MCF 10A (cell line): ENCODE measurements at regions of chr3 and their contacts with region 1.

Region 1: DNA sequence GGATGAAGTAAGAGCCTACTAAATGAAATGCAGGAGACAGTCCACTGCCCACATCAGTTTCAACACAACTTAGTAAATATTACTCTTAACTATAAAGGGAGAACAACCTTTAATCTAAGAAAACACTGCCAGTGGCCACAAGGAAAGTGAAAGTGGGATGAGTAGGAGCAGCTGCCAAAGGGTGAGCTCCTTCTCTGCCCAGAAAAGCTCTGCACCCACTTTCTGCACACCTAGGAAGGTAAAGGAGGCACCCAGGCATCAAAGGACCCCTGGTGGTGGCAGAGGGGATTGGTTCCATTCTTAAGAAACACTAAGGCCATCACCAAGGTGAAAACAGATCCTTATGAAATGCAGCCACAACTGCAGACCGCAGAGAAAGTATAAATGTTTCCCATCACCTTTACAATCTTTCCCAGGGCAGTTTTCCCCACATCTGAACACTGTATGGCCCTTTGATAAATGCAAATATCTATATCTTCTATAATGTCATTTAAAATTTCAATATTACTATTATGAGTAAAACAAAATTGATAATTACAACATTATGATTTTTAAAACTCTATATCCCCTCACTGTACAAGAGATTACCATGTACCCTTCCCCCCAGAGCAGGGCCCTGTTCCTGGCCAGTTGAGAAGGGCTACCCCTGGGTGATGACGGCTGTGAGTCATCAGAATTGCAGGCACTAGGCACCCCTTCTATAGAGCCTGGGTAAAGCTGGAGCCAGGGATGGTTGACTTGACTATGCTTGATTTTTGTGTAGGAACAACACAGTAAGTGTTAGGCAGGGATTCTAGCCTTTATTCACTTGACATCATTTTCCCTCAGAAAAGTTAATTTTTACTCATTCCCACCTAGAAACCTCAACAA is 92.0 kb downstream of the SNRK start:
- DNase-seq: peak; percentile 63
- H3K4me3 Mint-ChIP-seq: no peak overlapping the region
- H3K27ac Mint-ChIP-seq: no peak overlapping the region
- H3K4me1 Mint-ChIP-seq: no peaks in the 10 kb centered on the region
- H3K27me3 Mint-ChIP-seq: no peaks in the 10 kb centered on the region
- CTCF ChIP-seq: peak; percentile 44

Region 2: GRCh38 chr3:43223670-43224364 is 154.5 kb before region 1 on chr3:
- CTCF ChIA-PET with region 1: no interaction called
- POLR2A ChIA-PET with region 1: no interaction called
- intact Hi-C with region 1: loop called (anchors 1 kb)
- DNase-seq: no peak
- H3K4me3 Mint-ChIP-seq: no peak overlapping the region
- H3K27ac Mint-ChIP-seq: no peak overlapping the region
- H3K4me1 Mint-ChIP-seq: no peaks in the 10 kb centered on the region
- H3K27me3 Mint-ChIP-seq: no peaks in the 10 kb centered on the region
- CTCF ChIP-seq: peak; percentile 17

Region 3: DNA sequence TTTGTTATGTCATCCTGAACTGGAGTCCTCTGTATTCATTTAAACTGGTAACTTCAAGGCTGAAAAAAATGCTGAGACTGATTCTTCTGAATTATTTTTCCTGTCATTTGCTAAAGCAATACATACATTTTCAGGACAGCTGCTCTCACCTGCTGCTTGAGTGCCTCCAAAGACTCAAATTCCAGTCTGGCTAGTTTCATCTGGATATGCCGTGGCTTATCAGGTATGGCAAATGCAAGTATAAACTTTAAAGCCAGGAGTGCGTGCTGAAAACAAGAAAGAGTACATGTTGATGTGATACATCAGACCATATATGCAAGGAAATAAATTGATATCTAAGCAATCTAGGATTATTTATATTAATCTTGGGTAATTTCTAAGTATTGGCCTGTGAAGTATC is 54.2 kb after region 1 on chr3:
- CTCF ChIA-PET with region 1: no interaction called
- POLR2A ChIA-PET with region 1: no interaction called
- intact Hi-C with region 1: no loop called
- DNase-seq: no peak
- H3K4me3 Mint-ChIP-seq: no peak overlapping the region
- H3K27ac Mint-ChIP-seq: no peak overlapping the region
- H3K4me1 Mint-ChIP-seq: no peaks in the 10 kb centered on the region
- H3K27me3 Mint-ChIP-seq: no peaks in the 10 kb centered on the region
- CTCF ChIP-seq: no peak

Region 4: DNA sequence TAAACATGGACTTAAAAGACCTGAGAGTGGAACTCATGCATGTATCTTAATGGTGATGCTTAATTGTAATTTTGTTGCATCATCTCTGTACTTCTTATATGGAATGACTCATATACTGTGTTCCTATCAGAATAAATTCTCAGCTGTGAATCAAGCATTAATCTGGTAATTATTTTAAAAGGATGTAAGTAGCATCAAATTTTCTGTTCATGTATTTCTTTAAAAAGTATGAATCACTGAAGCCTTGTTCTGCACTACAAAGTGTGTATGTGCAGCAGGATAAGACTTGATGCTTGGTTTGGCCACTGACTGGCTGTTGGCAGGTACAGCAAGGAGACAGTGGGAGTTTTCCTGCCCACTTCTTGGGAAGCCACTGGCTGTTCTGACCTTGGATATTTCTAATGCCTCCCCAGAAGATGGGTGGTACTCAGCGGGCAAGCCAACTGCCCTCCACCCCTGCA is 119.6 kb after region 1 on chr3:
- CTCF ChIA-PET with region 1: interaction called, 5 read pairs
- POLR2A ChIA-PET with region 1: no interaction called
- intact Hi-C with region 1: loop called (anchors 10 kb)
- DNase-seq: peak; percentile 28
- H3K4me3 Mint-ChIP-seq: no peak overlapping the region
- H3K27ac Mint-ChIP-seq: no peak overlapping the region
- H3K4me1 Mint-ChIP-seq: peaks cover 18% of the 10 kb centered on the region
- H3K27me3 Mint-ChIP-seq: no peaks in the 10 kb centered on the region
- CTCF ChIP-seq: no peak